Keratinocyte (primary cell): ENCODE measurements at regions of chr9 and their contacts with region 1.

Region 1: GRCh38 chr9:20419533-20419932 is 202.8 kb downstream of the MLLT3 start:
- DNase-seq: no peak
- H3K4me3 ChIP-seq: no peak overlapping the region
- H3K27ac ChIP-seq: no peak overlapping the region
- H3K4me1 ChIP-seq: no peaks in the 10 kb centered on the region
- H3K27me3 ChIP-seq: no peaks in the 10 kb centered on the region
- CTCF ChIP-seq: no peak

Region 2: DNA sequence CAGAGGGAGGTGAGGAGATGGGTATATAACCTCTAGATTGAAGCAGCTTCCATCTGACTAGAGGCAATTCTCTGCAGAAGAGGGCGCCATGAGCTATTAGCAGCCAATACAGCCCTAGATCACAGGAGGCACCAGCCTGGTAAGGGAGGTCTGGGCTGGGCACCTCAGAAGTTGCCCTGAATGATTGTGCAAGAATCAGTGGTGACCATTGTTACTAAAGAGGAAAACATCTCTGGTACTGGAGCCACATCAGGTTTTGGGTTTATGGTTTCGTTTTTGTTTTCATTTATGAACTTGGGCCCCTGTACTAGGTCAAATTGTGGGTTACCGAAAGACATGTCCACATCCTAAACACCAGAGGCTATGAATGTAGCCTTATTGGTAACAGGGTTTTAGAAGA is 139.2 kb before region 1 on chr9:
- dilution Hi-C with region 1: no loop called
- DNase-seq: no peak
- H3K4me3 ChIP-seq: no peak overlapping the region
- H3K27ac ChIP-seq: no peak overlapping the region
- H3K4me1 ChIP-seq: no peaks in the 10 kb centered on the region
- H3K27me3 ChIP-seq: no peaks in the 10 kb centered on the region
- CTCF ChIP-seq: peak in 1 of 3 experiments; percentile 20

Region 3: DNA sequence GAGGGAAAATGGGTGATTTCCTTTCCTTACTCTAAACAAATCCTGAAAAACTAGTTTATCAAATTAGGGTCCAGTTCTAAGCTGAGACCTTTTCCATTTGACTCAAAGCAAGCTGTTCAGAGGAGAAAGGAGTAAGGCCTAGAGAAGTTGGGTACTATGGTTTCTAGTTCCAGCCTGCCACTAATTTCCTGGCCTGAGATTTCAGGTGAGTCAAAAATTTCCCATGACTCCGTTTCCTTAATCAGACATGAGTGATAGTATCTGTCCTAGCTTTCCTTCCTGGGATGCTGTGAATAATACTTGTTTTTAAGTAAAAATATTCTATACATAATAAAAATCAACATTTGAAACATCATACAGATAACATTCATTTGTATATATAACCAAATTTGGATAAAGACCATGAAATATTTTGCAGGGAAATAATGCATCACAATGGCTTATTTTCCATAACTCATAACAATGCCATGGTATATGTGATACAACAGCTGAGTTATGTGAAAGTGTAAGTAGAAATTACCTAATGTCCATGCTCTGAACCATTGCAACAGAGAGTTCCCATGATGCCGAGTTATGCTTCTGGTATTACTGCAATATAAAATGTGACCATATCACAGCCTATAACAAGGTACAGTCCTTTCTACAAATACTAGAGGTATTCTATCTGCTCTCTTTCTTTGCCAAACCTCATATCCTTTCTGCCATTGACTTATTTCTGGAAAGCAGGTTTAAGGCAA is 60.1 kb after region 1 on chr9:
- dilution Hi-C with region 1: loop called (anchors 10 kb)
- DNase-seq: no peak
- H3K4me3 ChIP-seq: no peak overlapping the region
- H3K27ac ChIP-seq: peak overlapping the region; percentile 32
- H3K4me1 ChIP-seq: peaks cover 24% of the 10 kb centered on the region
- H3K27me3 ChIP-seq: no peaks in the 10 kb centered on the region
- CTCF ChIP-seq: no peak